IMR-90 (cell line): ENCODE measurements at regions of chr20 and their contacts with region 1.

Region 1: DNA sequence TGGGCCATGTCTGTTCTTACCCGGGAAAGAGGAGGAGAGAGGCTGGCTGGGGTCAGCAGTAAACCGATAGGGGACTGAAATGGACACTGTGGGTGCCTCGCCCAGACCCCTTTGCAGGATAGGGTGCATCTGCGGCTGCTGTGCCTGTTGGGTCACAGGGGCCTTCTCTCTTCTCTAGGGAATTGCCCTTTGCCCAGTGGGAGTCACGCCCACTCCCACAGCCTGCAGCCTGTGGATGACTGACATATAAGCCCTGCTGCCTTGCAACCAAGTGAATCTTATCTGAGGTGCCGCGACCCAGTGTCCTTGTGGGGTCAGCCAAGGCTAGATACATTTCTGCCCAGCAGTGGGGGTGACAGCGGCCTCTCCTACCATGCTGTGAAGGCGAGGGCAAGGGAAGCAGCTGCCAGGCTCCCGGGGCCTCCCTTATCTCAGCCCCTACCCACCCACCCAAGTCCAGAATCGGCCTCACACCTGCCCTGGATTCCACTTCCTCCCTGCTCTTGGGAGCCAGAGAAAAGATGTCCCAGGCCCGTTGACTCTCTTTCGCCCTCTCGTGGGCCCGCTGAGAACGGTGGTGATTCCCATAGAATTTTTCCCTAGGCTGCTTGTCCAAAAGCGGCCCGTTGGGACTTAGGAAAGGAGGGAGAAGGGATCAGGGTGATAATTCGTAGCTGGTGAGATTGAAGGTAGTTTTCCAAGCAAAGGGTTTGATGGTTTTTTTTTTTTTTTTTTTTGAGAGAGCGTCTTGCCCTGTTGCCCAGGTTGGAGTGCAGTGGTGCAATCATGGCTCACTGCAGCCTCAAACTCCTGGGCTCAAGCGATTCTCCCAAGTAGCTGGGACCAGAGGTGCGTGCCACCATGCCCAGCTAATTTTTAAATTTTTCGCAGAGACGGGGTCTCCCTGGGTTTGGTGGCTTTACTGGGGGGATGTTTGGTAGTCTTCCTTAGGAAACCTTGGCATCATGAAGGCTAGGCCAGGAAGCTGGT is 76.4 kb upstream of the RNF24 start:
- DNase-seq: peak; percentile 58
- ATAC-seq: peak; percentile 69
- H3K4me3 ChIP-seq: no peak overlapping the region
- H3K27ac ChIP-seq: peak overlapping the region; percentile 79
- H3K4me1 ChIP-seq: peaks cover 13% of the 10 kb centered on the region
- H3K27me3 ChIP-seq: no peaks in the 10 kb centered on the region
- CTCF ChIP-seq: peak; percentile 76
- POLR2A ChIP-seq: peak; percentile 20
- RAD21 ChIP-seq: peak; percentile 69

Region 2: DNA sequence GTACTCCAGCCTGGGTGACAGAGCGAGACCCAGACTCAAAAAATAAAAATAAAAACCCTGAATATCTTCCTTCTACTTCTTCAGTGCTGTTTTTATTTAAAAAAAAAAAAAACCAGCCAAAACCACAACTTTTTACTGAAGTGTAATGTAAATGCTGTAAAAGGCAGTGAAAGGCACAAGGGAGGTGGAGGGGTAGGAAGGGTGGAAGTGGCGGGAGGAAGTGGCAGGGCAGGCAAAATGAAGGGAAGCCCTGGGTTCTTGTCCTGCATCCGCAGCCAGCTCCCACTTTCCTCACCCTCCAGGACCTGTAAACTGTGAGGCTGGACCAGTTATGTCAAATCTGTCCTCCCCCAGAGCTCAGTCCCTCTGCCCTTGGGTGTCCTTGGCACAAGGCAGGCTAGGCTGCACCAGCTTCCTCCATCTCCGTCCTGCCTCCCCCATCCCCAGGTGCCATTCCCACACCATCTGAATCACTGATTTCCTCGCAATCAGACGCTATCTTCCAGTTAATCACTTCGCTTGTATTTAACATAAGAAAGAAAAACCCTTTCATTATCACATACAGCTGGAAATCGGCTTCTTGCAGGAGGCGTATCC is 216.3 kb before region 1 on chr20:
- CTCF ChIA-PET with region 1: interaction called, 6 read pairs
- POLR2A ChIA-PET with region 1: interaction called, 11 read pairs
- dilution Hi-C with region 1: no loop called
- in situ Hi-C with region 1: no loop called
- intact Hi-C with region 1: no loop called
- DNase-seq: no peak
- ATAC-seq: no peak
- H3K4me3 ChIP-seq: no peak overlapping the region
- H3K27ac ChIP-seq: no peak overlapping the region
- H3K4me1 ChIP-seq: no peaks in the 10 kb centered on the region
- H3K27me3 ChIP-seq: no peaks in the 10 kb centered on the region
- CTCF ChIP-seq: no peak
- POLR2A ChIP-seq: no peak
- RAD21 ChIP-seq: no peak

Region 3: GRCh38 chr20:3932681-3933080 is 159.1 kb before region 1 on chr20:
- CTCF ChIA-PET with region 1: no interaction called
- POLR2A ChIA-PET with region 1: no interaction called
- dilution Hi-C with region 1: no loop called
- in situ Hi-C with region 1: no loop called
- intact Hi-C with region 1: loop called (anchors 5 kb)
- DNase-seq: peak; percentile 29
- ATAC-seq: no peak
- H3K4me3 ChIP-seq: no peak overlapping the region
- H3K27ac ChIP-seq: peak overlapping the region; percentile 11; the same call in 1 of the 2 replicates
- H3K4me1 ChIP-seq: peaks cover 19% of the 10 kb centered on the region
- H3K27me3 ChIP-seq: no peaks in the 10 kb centered on the region
- CTCF ChIP-seq: no peak
- POLR2A ChIP-seq: no peak
- RAD21 ChIP-seq: no peak

Region 4: GRCh38 chr20:4344670-4345069 is 252.9 kb after region 1 on chr20:
- CTCF ChIA-PET with region 1: no interaction called
- POLR2A ChIA-PET with region 1: no interaction called
- dilution Hi-C with region 1: no loop called
- in situ Hi-C with region 1: no loop called
- intact Hi-C with region 1: no loop called
- DNase-seq: peak; percentile 10
- ATAC-seq: no peak
- H3K4me3 ChIP-seq: no peak overlapping the region
- H3K27ac ChIP-seq: no peak overlapping the region
- H3K4me1 ChIP-seq: peaks cover 7% of the 10 kb centered on the region
- H3K27me3 ChIP-seq: peaks cover 13% of the 10 kb centered on the region
- CTCF ChIP-seq: no peak
- POLR2A ChIP-seq: no peak
- RAD21 ChIP-seq: no peak